ENCODE measurements at regions of chr1 and their contacts with region 1.

Region 1: GRCh38 chr1:91803847-91804545 is 82.0 kb downstream of the TGFBR3 start:
- DNase-seq: peak; percentile 41 to 93 (median 90)
- ATAC-seq: peak; percentile 69
- H3K4me3 ChIP-seq: peak overlapping the region; percentile 48
- H3K4me3 Mint-ChIP-seq: peak overlapping the region; percentile 67 to 90 (median 78)
- H3K27ac ChIP-seq: peak overlapping the region; percentile 99
- H3K27ac Mint-ChIP-seq: peak overlapping the region; percentile 96 to 100 (median 98)
- H3K4me1 ChIP-seq: peaks cover 27 to 33% of the 10 kb centered on the region in 2 donors
- H3K4me1 Mint-ChIP-seq: peaks cover 34 to 71% (median 49%) of the 10 kb centered on the region in 7 donors
- H3K27me3 ChIP-seq: no peaks in the 10 kb centered on the region
- H3K27me3 Mint-ChIP-seq: peaks cover 0 to 15% (median 0%) of the 10 kb centered on the region in 5 donors

Region 2: GRCh38 chr1:91021686-91022517 is 782.1 kb before region 1 on chr1 and contains the start of gene ZNF644:
- CTCF ChIA-PET with region 1: no interaction called
- POLR2A ChIA-PET with region 1: no interaction called
- intact Hi-C with region 1: loop called in 1 of 2 experiments (anchors 1 kb)
- DNase-seq: peak; percentile 81 to 95 (median 93)
- ATAC-seq: peak; percentile 91
- H3K4me3 ChIP-seq: peak within 1 kb of the TSS; percentile 62
- H3K4me3 Mint-ChIP-seq: peak within 1 kb of the TSS; percentile 90 to 97 (median 96)
- H3K27ac ChIP-seq: peak within 1 kb of the TSS; percentile 99
- H3K27ac Mint-ChIP-seq: peak within 1 kb of the TSS; percentile 95 to 100 (median 98)
- H3K4me1 ChIP-seq: peaks cover 37 to 45% of the 10 kb centered on the region in 2 donors
- H3K4me1 Mint-ChIP-seq: peaks cover 37 to 83% (median 68%) of the 10 kb centered on the region in 7 donors
- H3K27me3 ChIP-seq: no peaks in the 10 kb centered on the region
- H3K27me3 Mint-ChIP-seq: peaks cover 0 to 2% (median 0%) of the 10 kb centered on the region in 5 donors
- total RNA-seq, gene ZNF644: 63.5 to 117 (median 85.2) TPM

Region 3: DNA sequence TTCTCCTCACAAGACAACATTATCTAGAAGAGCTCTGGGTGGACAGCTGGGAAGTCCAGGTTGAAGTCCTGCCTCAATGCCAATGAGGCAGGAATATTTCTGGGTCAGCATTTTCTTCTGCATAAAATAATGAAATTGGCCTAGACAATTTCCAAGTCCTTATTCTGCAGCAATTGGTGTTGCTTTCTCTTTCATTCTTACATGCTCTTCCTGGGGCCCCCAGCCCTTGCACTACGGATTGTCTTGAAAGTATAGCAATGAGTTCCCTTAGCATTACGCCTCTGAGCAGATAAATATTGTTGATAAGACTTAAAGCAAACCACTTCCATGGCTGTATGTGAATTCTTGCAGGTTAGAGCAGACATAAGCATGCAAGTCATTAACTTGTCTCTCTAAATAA is 106.6 kb before region 1 on chr1:
- CTCF ChIA-PET with region 1: no interaction called
- POLR2A ChIA-PET with region 1: no interaction called
- intact Hi-C with region 1: loop called (anchors 1 to 5 kb)
- DNase-seq: peak in 8 of 9 donors; percentile 52 to 73 (median 60)
- ATAC-seq: peak; percentile 88
- H3K4me3 ChIP-seq: peak overlapping the region; percentile 45
- H3K4me3 Mint-ChIP-seq: peak overlapping the region; percentile 25 to 88 (median 57)
- H3K27ac ChIP-seq: peak overlapping the region; percentile 35
- H3K27ac Mint-ChIP-seq: peak overlapping the region; percentile 39 to 90 (median 83)
- H3K4me1 ChIP-seq: peaks cover 14 to 18% of the 10 kb centered on the region in 2 donors
- H3K4me1 Mint-ChIP-seq: peaks cover 19 to 43% (median 37%) of the 10 kb centered on the region in 7 donors
- H3K27me3 ChIP-seq: no peaks in the 10 kb centered on the region
- H3K27me3 Mint-ChIP-seq: no peaks in the 10 kb centered on the region

Region 4: GRCh38 chr1:91827459-91828321 is 23.7 kb after region 1 on chr1:
- CTCF ChIA-PET with region 1: no interaction called
- POLR2A ChIA-PET with region 1: no interaction called
- intact Hi-C with region 1: loop called in 1 of 2 experiments (anchors 2 kb)
- DNase-seq: no peak
- ATAC-seq: no peak
- H3K4me3 ChIP-seq: no peak overlapping the region
- H3K4me3 Mint-ChIP-seq: no peak overlapping the region
- H3K27ac ChIP-seq: no peak overlapping the region
- H3K27ac Mint-ChIP-seq: peak overlapping the region in 2 of 9 donors; percentile 8 to 17
- H3K4me1 ChIP-seq: peaks cover 0 to 12% of the 10 kb centered on the region in 2 donors
- H3K4me1 Mint-ChIP-seq: peaks cover 11 to 40% (median 17%) of the 10 kb centered on the region in 7 donors
- H3K27me3 ChIP-seq: no peaks in the 10 kb centered on the region
- H3K27me3 Mint-ChIP-seq: no peaks in the 10 kb centered on the region

Region 5: GRCh38 chr1:92485381-92486257 is 681.6 kb after region 1 on chr1:
- CTCF ChIA-PET with region 1: no interaction called
- POLR2A ChIA-PET with region 1: no interaction called
- intact Hi-C with region 1: loop called (anchors 2 to 5 kb)
- DNase-seq: peak; percentile 60 to 89 (median 74)
- ATAC-seq: peak; percentile 77
- H3K4me3 ChIP-seq: peak overlapping the region; percentile 83
- H3K4me3 Mint-ChIP-seq: peak overlapping the region; percentile 91 to 99 (median 94)
- H3K27ac ChIP-seq: peak overlapping the region; percentile 67
- H3K27ac Mint-ChIP-seq: peak overlapping the region; percentile 85 to 93 (median 90)
- H3K4me1 ChIP-seq: peaks cover 14 to 15% of the 10 kb centered on the region in 2 donors
- H3K4me1 Mint-ChIP-seq: peaks cover 26 to 45% (median 37%) of the 10 kb centered on the region in 7 donors
- H3K27me3 ChIP-seq: no peaks in the 10 kb centered on the region
- H3K27me3 Mint-ChIP-seq: peaks cover 0 to 3% (median 0%) of the 10 kb centered on the region in 5 donors

Region 6: DNA sequence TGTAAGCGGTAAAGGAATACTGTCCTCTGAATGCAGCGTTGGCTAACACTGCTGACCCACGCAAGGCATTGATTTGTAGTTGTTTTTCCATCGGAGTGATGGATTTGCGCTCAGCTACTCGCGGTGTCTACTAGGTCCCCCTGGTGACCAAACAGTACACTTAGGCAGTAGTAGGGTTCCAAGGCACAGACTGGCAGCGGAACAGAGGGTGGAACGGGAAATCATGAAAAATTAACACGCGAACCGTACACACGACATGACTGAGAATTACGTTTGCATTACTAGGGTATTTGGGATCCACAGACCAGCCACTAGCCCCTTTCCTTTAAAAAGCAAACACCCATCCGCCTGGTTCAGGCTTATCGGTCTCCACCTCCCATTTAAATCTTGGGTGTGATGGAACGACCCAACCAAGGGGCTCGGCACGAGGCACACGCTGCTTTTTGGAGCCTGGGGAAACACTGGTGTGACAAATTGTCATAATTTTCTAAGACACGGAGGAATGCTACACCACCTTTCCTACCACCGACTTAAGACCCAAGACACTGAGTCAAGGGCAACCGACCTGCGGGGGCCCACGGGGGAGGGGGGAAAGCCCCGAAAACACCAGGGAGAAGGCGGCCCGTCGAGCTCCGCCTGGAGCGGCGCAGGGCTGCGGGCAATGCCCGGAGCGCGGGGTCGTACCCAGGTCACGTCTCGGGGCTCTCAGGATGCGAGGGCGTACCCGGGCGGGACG is 1156.6 kb after region 1 on chr1:
- CTCF ChIA-PET with region 1: no interaction called
- POLR2A ChIA-PET with region 1: no interaction called
- intact Hi-C with region 1: loop called in 1 of 2 experiments (anchors 10 kb)
- DNase-seq: peak in 8 of 9 donors; percentile 57 to 85 (median 76)
- ATAC-seq: peak; percentile 65
- H3K4me3 ChIP-seq: peak overlapping the region; percentile 58
- H3K4me3 Mint-ChIP-seq: peak overlapping the region in 9 of 10 donors; percentile 86 to 97 (median 90)
- H3K27ac ChIP-seq: peak overlapping the region; percentile 100
- H3K27ac Mint-ChIP-seq: peak overlapping the region; percentile 95 to 99 (median 98)
- H3K4me1 ChIP-seq: peaks cover 39 to 55% of the 10 kb centered on the region in 2 donors
- H3K4me1 Mint-ChIP-seq: peaks cover 37 to 46% (median 41%) of the 10 kb centered on the region in 7 donors
- H3K27me3 ChIP-seq: no peaks in the 10 kb centered on the region
- H3K27me3 Mint-ChIP-seq: no peaks in the 10 kb centered on the region

Measured in naive thymus-derived CD4-positive, alpha-beta T cell (primary cell).